Caco-2 (cell line): ENCODE measurements at regions of chr2 and their contacts with region 1.

Region 1: GRCh38 chr2:8103083-8103708 is 578.7 kb upstream of the ID2 start:
- DNase-seq: peak; percentile 66 to 75
- H3K4me3 ChIP-seq: no peak overlapping the region
- H3K4me3 Mint-ChIP-seq: no peak overlapping the region
- H3K27ac Mint-ChIP-seq: no peak overlapping the region
- H3K4me1 ChIP-seq: peaks cover 27% of the 10 kb centered on the region
- H3K4me1 Mint-ChIP-seq: peaks cover 24% of the 10 kb centered on the region
- H3K27me3 ChIP-seq: no peaks in the 10 kb centered on the region
- H3K27me3 Mint-ChIP-seq: no peaks in the 10 kb centered on the region
- CTCF ChIP-seq: no peak

Region 2: DNA sequence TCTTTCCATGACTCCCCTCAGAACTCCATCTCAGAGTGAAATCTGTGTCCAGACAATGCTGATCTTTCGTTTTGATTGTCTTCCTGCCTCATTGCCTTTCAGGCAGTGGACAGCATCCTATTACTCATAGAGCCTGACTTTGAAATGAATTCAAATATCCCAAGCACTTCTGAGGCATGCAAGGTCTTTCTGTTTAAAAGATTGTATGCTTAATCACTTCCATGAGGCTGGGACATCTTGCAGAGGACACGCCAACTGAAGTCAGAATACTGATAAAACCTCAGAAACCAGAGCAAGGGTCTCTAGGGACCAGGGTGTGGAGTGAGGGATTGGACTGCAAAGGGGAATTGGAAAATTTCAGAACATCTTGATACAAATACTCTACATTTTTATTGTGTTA is 257.9 kb before region 1 on chr2:
- CTCF ChIA-PET with region 1: no interaction called
- POLR2A ChIA-PET with region 1: no interaction called
- intact Hi-C with region 1: loop called (anchors 1 kb)
- DNase-seq: no peak
- H3K4me3 ChIP-seq: no peak overlapping the region
- H3K4me3 Mint-ChIP-seq: no peak overlapping the region
- H3K27ac Mint-ChIP-seq: no peak overlapping the region
- H3K4me1 ChIP-seq: peaks cover 22% of the 10 kb centered on the region
- H3K4me1 Mint-ChIP-seq: peaks cover 26% of the 10 kb centered on the region
- H3K27me3 ChIP-seq: no peaks in the 10 kb centered on the region
- H3K27me3 Mint-ChIP-seq: no peaks in the 10 kb centered on the region
- CTCF ChIP-seq: no peak

Region 3: GRCh38 chr2:8058652-8059051 is 44.5 kb before region 1 on chr2:
- CTCF ChIA-PET with region 1: no interaction called
- POLR2A ChIA-PET with region 1: no interaction called
- intact Hi-C with region 1: no loop called
- DNase-seq: no peak
- H3K4me3 ChIP-seq: no peak overlapping the region
- H3K4me3 Mint-ChIP-seq: no peak overlapping the region
- H3K27ac Mint-ChIP-seq: no peak overlapping the region
- H3K4me1 ChIP-seq: no peaks in the 10 kb centered on the region
- H3K4me1 Mint-ChIP-seq: no peaks in the 10 kb centered on the region
- H3K27me3 ChIP-seq: no peaks in the 10 kb centered on the region
- H3K27me3 Mint-ChIP-seq: peaks cover 6% of the 10 kb centered on the region
- CTCF ChIP-seq: no peak

Region 4: GRCh38 chr2:8119782-8120505 is 16.7 kb after region 1 on chr2:
- CTCF ChIA-PET with region 1: no interaction called
- POLR2A ChIA-PET with region 1: no interaction called
- intact Hi-C with region 1: loop called (anchors 1 kb)
- DNase-seq: peak in 1 of 2 experiments; percentile 52
- H3K4me3 ChIP-seq: no peak overlapping the region
- H3K4me3 Mint-ChIP-seq: peak overlapping the region; percentile 67
- H3K27ac Mint-ChIP-seq: peak overlapping the region; percentile 78
- H3K4me1 ChIP-seq: peaks cover 35% of the 10 kb centered on the region
- H3K4me1 Mint-ChIP-seq: peaks cover 29% of the 10 kb centered on the region
- H3K27me3 ChIP-seq: no peaks in the 10 kb centered on the region
- H3K27me3 Mint-ChIP-seq: no peaks in the 10 kb centered on the region
- CTCF ChIP-seq: no peak

Region 5: GRCh38 chr2:8125741-8126711 is 22.8 kb after region 1 on chr2:
- CTCF ChIA-PET with region 1: no interaction called
- POLR2A ChIA-PET with region 1: interaction called, 3 read pairs
- intact Hi-C with region 1: loop called (anchors 1 kb)
- DNase-seq: peak; percentile 54 to 77
- H3K4me3 ChIP-seq: no peak overlapping the region
- H3K4me3 Mint-ChIP-seq: no peak overlapping the region
- H3K27ac Mint-ChIP-seq: peak overlapping the region; percentile 50
- H3K4me1 ChIP-seq: peaks cover 31% of the 10 kb centered on the region
- H3K4me1 Mint-ChIP-seq: peaks cover 8% of the 10 kb centered on the region
- H3K27me3 ChIP-seq: no peaks in the 10 kb centered on the region
- H3K27me3 Mint-ChIP-seq: no peaks in the 10 kb centered on the region
- CTCF ChIP-seq: no peak

Region 6: DNA sequence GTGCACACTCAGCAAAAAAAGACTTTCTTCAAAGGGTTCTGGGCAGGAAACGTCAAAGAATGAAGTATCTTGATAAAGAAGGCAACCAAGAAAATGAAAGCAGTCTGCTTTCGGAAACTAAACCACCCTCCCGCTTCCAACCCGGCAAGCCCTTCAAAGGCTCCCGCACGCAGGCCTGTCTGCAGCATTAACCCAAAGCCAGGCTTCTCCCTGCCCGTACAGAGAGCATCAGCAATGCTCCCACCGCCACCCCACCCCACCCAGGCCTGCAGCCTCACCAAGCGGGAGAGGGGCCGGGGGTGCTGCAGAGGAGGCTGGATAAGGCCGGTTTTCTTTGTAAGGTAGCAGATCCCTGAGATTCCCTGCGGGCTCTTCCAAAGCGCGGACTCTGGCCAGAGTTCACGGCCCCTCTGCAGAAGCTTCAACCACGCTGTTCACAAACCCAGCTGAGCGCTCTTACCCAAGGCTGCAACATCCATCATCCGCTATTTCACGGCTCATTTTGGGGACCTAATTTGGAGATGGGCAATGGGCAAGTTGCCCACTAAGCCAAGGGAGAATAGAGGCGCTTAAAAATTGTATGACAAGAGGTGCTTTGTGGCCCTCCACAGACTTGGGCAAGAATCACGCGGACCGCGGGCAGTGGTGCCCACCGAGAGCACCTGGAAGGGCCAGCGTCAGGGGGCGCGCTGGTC is 353.1 kb after region 1 on chr2:
- CTCF ChIA-PET with region 1: no interaction called
- POLR2A ChIA-PET with region 1: no interaction called
- intact Hi-C with region 1: loop called (anchors 1 kb)
- DNase-seq: no peak
- H3K4me3 ChIP-seq: no peak overlapping the region; the same call in 1 of the 2 replicates
- H3K4me3 Mint-ChIP-seq: peak overlapping the region; percentile 52
- H3K27ac Mint-ChIP-seq: no peak overlapping the region
- H3K4me1 ChIP-seq: peaks cover 19% of the 10 kb centered on the region
- H3K4me1 Mint-ChIP-seq: peaks cover 22% of the 10 kb centered on the region
- H3K27me3 ChIP-seq: no peaks in the 10 kb centered on the region; the same call in 1 of the 2 replicates
- H3K27me3 Mint-ChIP-seq: no peaks in the 10 kb centered on the region
- CTCF ChIP-seq: no peak